ENCODE measurements at regions of chr6 and their contacts with region 1.

Region 1: GRCh38 chr6:44051515-44051914 is 75.7 kb downstream of the MRPL14 start:
- DNase-seq: peak; percentile 69 to 81
- H3K4me3 ChIP-seq: no peak overlapping the region
- H3K27ac ChIP-seq: peak overlapping the region; percentile 96
- H3K4me1 ChIP-seq: peaks cover 100% of the 10 kb centered on the region
- H3K27me3 ChIP-seq: no peaks in the 10 kb centered on the region
- CTCF ChIP-seq: no peak

Region 2: GRCh38 chr6:45272626-45273025 is 1221.1 kb after region 1 on chr6:
- CTCF ChIA-PET with region 1: no interaction called
- POLR2A ChIA-PET with region 1: interaction called, 10 read pairs
- intact Hi-C with region 1: no loop called
- DNase-seq: no peak
- H3K4me3 ChIP-seq: no peak overlapping the region
- H3K27ac ChIP-seq: no peak overlapping the region
- H3K4me1 ChIP-seq: no peaks in the 10 kb centered on the region
- H3K27me3 ChIP-seq: no peaks in the 10 kb centered on the region
- CTCF ChIP-seq: no peak